ENCODE measurements at regions of chr3 and their contacts with region 1.

Region 1: GRCh38 chr3:30693470-30694120 is 87.2 kb downstream of the TGFBR2 start:
- DNase-seq: peak; percentile 51
- H3K4me3 Mint-ChIP-seq: no peak overlapping the region
- H3K27ac Mint-ChIP-seq: peak overlapping the region; percentile 76
- H3K4me1 Mint-ChIP-seq: peaks cover 69% of the 10 kb centered on the region
- H3K27me3 Mint-ChIP-seq: no peaks in the 10 kb centered on the region

Region 2: DNA sequence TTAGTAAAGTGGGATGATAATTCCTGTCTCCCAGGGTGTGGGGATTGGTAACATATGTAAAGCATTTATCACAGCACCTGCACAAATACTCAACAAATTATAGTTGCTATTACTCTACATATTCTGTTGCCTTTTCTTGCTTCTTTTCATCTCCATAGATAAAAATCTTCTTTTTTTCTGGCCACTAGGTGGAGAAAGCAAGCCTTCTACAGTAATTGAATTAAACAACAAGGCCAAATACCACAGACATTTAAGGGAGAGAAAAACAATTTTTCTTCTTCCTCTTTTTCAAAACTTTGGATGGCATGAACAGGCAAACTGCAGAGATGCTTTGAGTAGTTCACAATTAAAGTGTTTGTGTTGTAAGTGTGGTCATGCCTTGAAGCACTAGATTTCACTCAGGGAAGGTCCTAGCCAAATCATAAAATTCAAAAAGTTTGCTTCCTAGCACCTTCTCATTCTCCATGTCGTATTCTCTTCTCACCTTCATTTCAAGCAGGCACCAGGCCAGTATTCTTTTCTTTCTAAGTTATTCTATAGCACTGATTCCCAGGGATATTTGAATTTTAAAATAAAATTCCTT is 580.6 kb before region 1 on chr3:
- CTCF ChIA-PET with region 1: interaction called, 3 read pairs
- intact Hi-C with region 1: loop called (anchors 1 kb)
- DNase-seq: no peak
- H3K4me3 Mint-ChIP-seq: no peak overlapping the region
- H3K27ac Mint-ChIP-seq: no peak overlapping the region
- H3K4me1 Mint-ChIP-seq: peaks cover 10% of the 10 kb centered on the region
- H3K27me3 Mint-ChIP-seq: no peaks in the 10 kb centered on the region

Region 3: DNA sequence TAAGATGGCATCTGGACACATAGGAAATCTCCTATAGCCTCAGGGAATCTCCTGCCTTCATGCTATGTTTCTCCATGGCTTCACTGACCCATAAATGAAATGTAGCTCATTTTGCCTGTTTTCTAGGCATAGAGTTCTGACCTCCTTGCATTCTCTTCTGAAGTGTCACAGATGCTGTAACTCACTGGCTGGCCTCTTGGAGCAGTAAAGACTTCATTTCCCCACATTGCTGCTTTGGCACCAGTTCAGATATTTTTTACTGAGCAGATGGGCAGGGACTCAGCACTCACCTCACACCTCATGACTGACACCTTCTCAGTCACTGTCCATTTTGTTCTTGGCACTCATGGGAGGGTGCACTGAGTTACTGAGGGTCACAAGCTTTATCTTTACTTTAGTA is 373.9 kb before region 1 on chr3:
- CTCF ChIA-PET with region 1: interaction called, 7 read pairs
- intact Hi-C with region 1: loop called (anchors 1 kb)
- DNase-seq: peak; percentile 67
- H3K4me3 Mint-ChIP-seq: no peak overlapping the region
- H3K27ac Mint-ChIP-seq: peak overlapping the region; percentile 26
- H3K4me1 Mint-ChIP-seq: peaks cover 21% of the 10 kb centered on the region
- H3K27me3 Mint-ChIP-seq: no peaks in the 10 kb centered on the region

Region 4: DNA sequence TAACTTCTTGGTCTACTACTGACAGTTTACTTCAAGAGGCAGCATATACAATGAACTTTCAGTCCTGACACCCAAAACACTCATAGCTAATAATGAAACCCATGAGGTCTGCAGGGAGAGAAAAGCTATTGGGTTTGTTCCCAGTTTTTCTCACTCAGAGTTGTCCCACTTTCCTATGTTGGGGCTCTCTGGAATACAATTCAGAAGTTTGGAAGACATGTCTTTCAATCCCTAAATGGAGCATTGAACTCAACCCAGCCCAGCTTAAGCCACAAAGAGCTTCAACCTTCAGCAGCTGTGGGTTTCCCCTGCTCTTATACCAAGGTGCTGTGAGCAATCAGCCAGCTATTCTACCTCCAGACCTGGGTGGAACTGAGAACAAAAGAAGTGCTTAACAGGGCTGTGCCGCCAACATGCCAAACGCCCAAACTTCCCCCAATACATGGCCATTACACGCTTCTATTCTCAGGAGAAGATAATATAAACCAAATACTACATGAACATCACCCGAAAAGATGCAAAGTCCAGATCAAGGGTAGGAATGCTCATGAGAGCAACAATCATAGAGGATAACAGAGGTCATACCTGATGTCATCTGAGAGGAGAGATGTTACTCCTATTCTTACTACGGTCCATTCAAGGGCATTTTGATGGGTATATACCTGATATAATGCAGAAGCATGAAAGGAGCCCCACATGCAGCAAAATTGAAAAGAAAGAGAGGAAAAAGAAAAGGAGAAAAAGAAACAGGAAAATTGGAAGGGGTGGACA is 218.4 kb before region 1 on chr3:
- CTCF ChIA-PET with region 1: interaction called, 3 read pairs
- intact Hi-C with region 1: loop called (anchors 5 kb)
- DNase-seq: peak; percentile 64
- H3K4me3 Mint-ChIP-seq: peak overlapping the region; percentile 2
- H3K27ac Mint-ChIP-seq: peak overlapping the region; percentile 14
- H3K4me1 Mint-ChIP-seq: peaks cover 52% of the 10 kb centered on the region
- H3K27me3 Mint-ChIP-seq: no peaks in the 10 kb centered on the region

Region 5: GRCh38 chr3:30628901-30629590 is 64.5 kb before region 1 on chr3:
- CTCF ChIA-PET with region 1: interaction called, 13 read pairs
- intact Hi-C with region 1: loop called (anchors 1 kb)
- DNase-seq: peak; percentile 55
- H3K4me3 Mint-ChIP-seq: peak overlapping the region; percentile 53
- H3K27ac Mint-ChIP-seq: peak overlapping the region; percentile 98
- H3K4me1 Mint-ChIP-seq: peaks cover 91% of the 10 kb centered on the region
- H3K27me3 Mint-ChIP-seq: no peaks in the 10 kb centered on the region

Region 6: GRCh38 chr3:30681643-30682211 is 11.9 kb before region 1 on chr3:
- CTCF ChIA-PET with region 1: interaction called, 15 read pairs
- intact Hi-C with region 1: loop called (anchors 1 kb)
- DNase-seq: peak; percentile 45
- H3K4me3 Mint-ChIP-seq: peak overlapping the region; percentile 18
- H3K27ac Mint-ChIP-seq: peak overlapping the region; percentile 93
- H3K4me1 Mint-ChIP-seq: peaks cover 100% of the 10 kb centered on the region
- H3K27me3 Mint-ChIP-seq: no peaks in the 10 kb centered on the region

Region 7: DNA sequence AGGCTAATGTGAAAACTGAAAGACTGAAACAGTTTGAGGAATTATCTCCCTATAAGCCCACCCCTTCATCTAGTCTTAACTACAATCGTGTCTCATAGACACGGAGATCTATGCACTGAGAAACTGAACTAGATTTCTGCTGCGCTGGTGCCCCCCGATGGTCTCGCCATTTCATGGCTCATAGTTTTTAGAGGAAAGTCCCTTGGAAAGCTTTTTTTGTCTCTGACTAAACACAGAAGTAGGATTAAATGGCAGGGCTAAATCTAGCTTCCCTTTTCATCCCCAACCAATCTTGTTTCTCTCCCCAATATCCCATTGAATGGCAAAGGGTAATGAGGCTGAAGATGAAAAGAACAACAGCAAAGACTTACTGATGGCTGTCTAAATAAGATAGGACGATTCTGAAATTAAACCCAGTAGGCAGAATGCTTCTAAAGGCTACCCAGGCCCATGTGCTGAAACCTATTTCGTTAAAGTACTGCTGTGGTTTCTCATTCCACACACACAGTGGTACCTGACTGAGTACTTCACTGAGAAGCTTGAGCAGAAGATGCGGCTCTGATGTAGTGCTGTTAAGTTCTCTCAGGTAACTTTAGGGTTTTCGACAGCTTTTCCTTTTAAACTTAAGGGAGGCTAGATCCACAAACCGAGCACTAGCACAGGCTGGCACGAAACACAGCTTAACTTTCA is 58.2 kb after region 1 on chr3:
- CTCF ChIA-PET with region 1: interaction called, 9 read pairs
- intact Hi-C with region 1: loop called (anchors 1 kb)
- DNase-seq: peak; percentile 88
- H3K4me3 Mint-ChIP-seq: no peak overlapping the region
- H3K27ac Mint-ChIP-seq: no peak overlapping the region
- H3K4me1 Mint-ChIP-seq: peaks cover 45% of the 10 kb centered on the region
- H3K27me3 Mint-ChIP-seq: no peaks in the 10 kb centered on the region

Region 8: DNA sequence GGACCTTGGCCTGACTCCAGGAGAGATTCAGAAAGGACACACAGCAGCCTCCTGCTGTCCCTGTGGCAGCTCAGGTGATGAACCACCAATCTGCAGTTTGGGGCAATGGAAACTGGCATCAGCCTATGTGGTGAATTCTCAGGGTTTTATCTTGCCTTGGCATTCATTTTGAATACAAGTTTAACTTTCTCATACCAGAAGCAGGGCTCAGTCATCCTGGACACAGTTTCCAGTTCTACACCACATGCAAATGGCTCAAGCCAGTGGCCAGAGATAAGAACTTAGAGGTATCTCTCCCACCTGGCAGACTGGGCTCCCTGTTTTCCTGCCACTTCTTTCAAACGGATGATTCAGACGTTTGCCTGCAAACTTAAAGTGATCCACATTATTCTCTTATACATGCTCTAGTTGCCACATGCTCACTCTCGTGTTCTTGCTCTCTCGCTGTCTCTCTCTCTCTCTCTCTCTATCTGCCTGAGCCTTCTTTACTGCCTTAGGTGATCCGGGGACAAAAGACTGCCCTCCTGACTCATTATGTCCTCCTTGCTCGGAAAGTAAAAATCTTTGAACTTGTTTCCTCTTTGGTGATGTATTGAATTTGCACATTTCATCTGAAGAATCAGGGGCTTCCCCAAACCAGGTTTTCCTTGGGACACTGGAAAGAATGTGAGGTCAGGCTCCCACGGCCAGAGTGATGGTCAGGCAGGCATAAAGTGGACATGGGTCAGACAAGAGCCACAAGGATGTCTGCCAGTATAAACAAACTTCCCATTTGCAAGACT is 739.5 kb after region 1 on chr3:
- CTCF ChIA-PET with region 1: no interaction called
- intact Hi-C with region 1: no loop called
- DNase-seq: no peak
- H3K4me3 Mint-ChIP-seq: no peak overlapping the region
- H3K27ac Mint-ChIP-seq: no peak overlapping the region
- H3K4me1 Mint-ChIP-seq: no peaks in the 10 kb centered on the region
- H3K27me3 Mint-ChIP-seq: no peaks in the 10 kb centered on the region